Common myeloid progenitor, CD34-positive (primary cell): ENCODE measurements at regions of chr3 and their contacts with region 1.

Region 1: GRCh38 chr3:157572559-157573270 is 69.5 kb upstream of the VEPH1 start:
- DNase-seq: peak; percentile 46 to 62 (median 58)
- H3K4me3 ChIP-seq: no peak overlapping the region
- H3K27ac ChIP-seq: no peak overlapping the region
- H3K4me1 ChIP-seq: no peaks in the 10 kb centered on the region
- H3K27me3 ChIP-seq: no peaks in the 10 kb centered on the region

Region 2: DNA sequence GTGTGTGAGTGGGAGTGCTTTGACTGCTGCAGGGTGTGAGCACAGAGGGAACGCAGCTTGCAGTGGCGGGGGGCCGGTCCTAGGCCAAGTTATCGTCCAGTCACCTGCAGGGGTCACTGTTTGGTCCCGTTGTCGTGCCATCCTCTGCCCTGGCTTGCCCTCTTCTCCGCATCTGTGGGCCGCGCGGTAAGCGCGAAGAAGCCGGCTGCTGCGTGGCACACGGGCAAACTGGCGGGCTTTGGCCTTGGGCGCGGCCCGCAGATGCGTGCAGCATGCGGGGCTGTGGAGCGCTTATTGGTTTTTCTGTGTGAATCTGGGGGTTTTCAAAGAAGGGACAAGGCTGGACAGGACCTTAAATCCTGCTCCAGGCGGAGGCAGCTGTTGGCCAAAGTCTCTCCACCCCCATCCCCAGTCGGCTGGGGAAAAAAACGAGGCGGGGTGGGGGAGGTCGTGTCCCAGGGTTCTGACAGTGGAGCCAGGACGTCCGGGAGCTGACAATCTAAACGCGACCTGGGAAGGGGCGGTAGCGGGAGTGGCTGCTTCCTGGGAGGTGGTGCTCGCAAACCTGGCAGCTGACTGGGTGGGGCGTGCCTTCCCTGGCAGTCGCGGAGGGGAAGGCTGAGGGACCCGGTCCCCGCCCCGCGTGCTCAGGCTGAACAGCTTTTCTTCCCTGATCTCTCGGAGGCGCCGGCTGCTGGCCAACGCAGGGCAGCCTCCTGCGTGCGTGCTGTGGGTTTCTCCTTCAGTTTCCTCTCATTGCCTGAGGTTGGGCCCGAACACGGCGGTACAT is 29.8 kb before region 1 on chr3:
- CTCF ChIA-PET with region 1: interaction called, 19 read pairs
- POLR2A ChIA-PET with region 1: no interaction called
- DNase-seq: peak; percentile 60 to 79 (median 76)
- H3K4me3 ChIP-seq: peak overlapping the region; percentile 23 to 65 (median 48)
- H3K27ac ChIP-seq: no peak overlapping the region
- H3K4me1 ChIP-seq: peaks cover 0 to 12% (median 9%) of the 10 kb centered on the region in 4 experiments
- H3K27me3 ChIP-seq: peaks cover 0 to 13% (median 0%) of the 10 kb centered on the region in 5 experiments